BJ (cell line): ENCODE measurements at regions of chr14 and their contacts with region 1.

Region 1: DNA sequence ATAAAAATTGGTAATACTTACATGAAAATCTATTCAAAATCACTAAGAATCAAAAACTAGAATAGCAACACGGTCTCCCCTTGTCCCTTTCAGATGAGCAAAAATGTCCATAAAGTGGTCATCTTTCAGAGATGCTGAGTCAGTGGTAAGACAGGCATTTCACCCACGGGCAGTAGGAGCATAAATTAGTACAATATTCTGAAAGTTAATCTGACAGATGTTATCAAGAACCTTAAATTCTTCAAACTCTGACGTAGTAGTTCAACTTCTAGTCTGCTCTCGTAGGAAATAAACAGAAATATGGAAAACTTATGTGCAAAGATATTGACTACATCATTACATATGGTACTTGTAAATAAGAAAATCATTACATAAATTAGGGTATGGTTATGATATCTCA is 33.1 kb upstream of the GNPNAT1 start:
- DNase-seq: no peak
- H3K4me3 ChIP-seq: no peak overlapping the region
- H3K27me3 ChIP-seq: no peaks in the 10 kb centered on the region
- CTCF ChIP-seq: no peak

Region 2: GRCh38 chr14:52808101-52808500 is 16.4 kb before region 1 on chr14:
- CTCF ChIA-PET with region 1: no interaction called
- POLR2A ChIA-PET with region 1: no interaction called
- DNase-seq: no peak
- H3K4me3 ChIP-seq: no peak overlapping the region
- H3K27me3 ChIP-seq: no peaks in the 10 kb centered on the region
- CTCF ChIP-seq: no peak

Region 3: GRCh38 chr14:53055003-53055402 is 230.5 kb after region 1 on chr14:
- CTCF ChIA-PET with region 1: interaction called, 27 read pairs
- POLR2A ChIA-PET with region 1: no interaction called
- DNase-seq: no peak
- H3K4me3 ChIP-seq: no peak overlapping the region
- H3K27me3 ChIP-seq: no peaks in the 10 kb centered on the region
- CTCF ChIP-seq: peak; percentile 62